ENCODE measurements at regions of chr1 and their contacts with region 1.

Region 1: DNA sequence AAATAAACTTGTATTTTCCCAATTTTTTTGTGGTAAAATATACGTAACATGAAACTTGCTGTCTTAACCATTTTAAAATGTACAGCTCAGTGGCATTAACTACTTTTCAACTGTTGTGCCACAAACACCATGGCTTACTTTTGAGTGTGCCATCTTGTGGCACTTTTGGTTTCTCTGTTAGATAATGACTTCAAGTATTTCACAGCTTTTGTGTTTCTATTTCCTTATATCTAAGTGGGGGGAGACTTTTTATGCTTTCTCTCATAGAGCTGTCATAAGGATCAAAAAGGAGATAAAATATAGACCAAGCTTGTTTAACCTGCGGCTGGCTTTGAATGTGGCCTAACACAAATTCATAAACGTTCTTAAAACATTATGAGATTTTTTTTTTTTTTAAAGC is 44.3 kb downstream of the CDC14A start:
- DNase-seq: peak in 1 of 2 donors; percentile 75
- ATAC-seq: peak; percentile 67 to 79 (median 77)
- H3K4me3 ChIP-seq: no peak overlapping the region
- H3K4me3 Mint-ChIP-seq: peak overlapping the region; percentile 72
- H3K27ac ChIP-seq: peak overlapping the region; percentile 89
- H3K27ac Mint-ChIP-seq: peak overlapping the region; percentile 80 to 95
- H3K4me1 ChIP-seq: peaks cover 49% of the 10 kb centered on the region
- H3K4me1 Mint-ChIP-seq: peaks cover 77% of the 10 kb centered on the region in 2 donors
- H3K27me3 ChIP-seq: no peaks in the 10 kb centered on the region
- H3K27me3 Mint-ChIP-seq: no peaks in the 10 kb centered on the region
- CTCF ChIP-seq: no peak

Region 2: GRCh38 chr1:100122177-100122576 is 274.5 kb before region 1 on chr1:
- intact Hi-C with region 1: no loop called
- DNase-seq: no peak
- ATAC-seq: no peak
- H3K4me3 ChIP-seq: no peak overlapping the region
- H3K4me3 Mint-ChIP-seq: no peak overlapping the region
- H3K27ac ChIP-seq: no peak overlapping the region
- H3K27ac Mint-ChIP-seq: no peak overlapping the region
- H3K4me1 ChIP-seq: no peaks in the 10 kb centered on the region
- H3K4me1 Mint-ChIP-seq: no peaks in the 10 kb centered on the region
- H3K27me3 ChIP-seq: no peaks in the 10 kb centered on the region
- H3K27me3 Mint-ChIP-seq: no peaks in the 10 kb centered on the region
- CTCF ChIP-seq: no peak

Region 3: GRCh38 chr1:100265931-100266740 is 130.5 kb before region 1 on chr1 and contains the start of gene RTCA:
- intact Hi-C with region 1: loop called (anchors 5 kb)
- DNase-seq: peak; percentile 93 to 99
- ATAC-seq: peak; percentile 93 to 98 (median 94)
- H3K4me3 ChIP-seq: peak within 1 kb of the TSS; percentile 86
- H3K4me3 Mint-ChIP-seq: peak within 1 kb of the TSS; percentile 100
- H3K27ac ChIP-seq: peak within 1 kb of the TSS; percentile 77
- H3K27ac Mint-ChIP-seq: peak within 1 kb of the TSS; percentile 97 to 99
- H3K4me1 ChIP-seq: peaks cover 32% of the 10 kb centered on the region
- H3K4me1 Mint-ChIP-seq: peaks cover 46 to 47% of the 10 kb centered on the region in 2 donors
- H3K27me3 ChIP-seq: no peaks in the 10 kb centered on the region
- H3K27me3 Mint-ChIP-seq: no peaks in the 10 kb centered on the region
- CTCF ChIP-seq: no peak
- total RNA-seq, gene RTCA: 49.3 to 60.8 (median 52.3) TPM

Region 4: GRCh38 chr1:100414693-100415497 is 18.2 kb after region 1 on chr1:
- intact Hi-C with region 1: loop called (anchors 2 kb)
- DNase-seq: peak in 1 of 2 donors; percentile 63
- ATAC-seq: peak; percentile 81 to 89 (median 88)
- H3K4me3 ChIP-seq: no peak overlapping the region
- H3K4me3 Mint-ChIP-seq: peak overlapping the region; percentile 22
- H3K27ac ChIP-seq: peak overlapping the region; percentile 59
- H3K27ac Mint-ChIP-seq: peak overlapping the region; percentile 89 to 92
- H3K4me1 ChIP-seq: peaks cover 9% of the 10 kb centered on the region
- H3K4me1 Mint-ChIP-seq: peaks cover 51 to 55% of the 10 kb centered on the region in 2 donors
- H3K27me3 ChIP-seq: no peaks in the 10 kb centered on the region
- H3K27me3 Mint-ChIP-seq: no peaks in the 10 kb centered on the region
- CTCF ChIP-seq: no peak

Region 5: GRCh38 chr1:100443811-100444571 is 47.3 kb after region 1 on chr1:
- intact Hi-C with region 1: loop called (anchors 2 kb)
- DNase-seq: peak in 1 of 2 donors; percentile 70
- ATAC-seq: peak; percentile 43 to 65 (median 58)
- H3K4me3 ChIP-seq: no peak overlapping the region
- H3K4me3 Mint-ChIP-seq: peak overlapping the region; percentile 77
- H3K27ac ChIP-seq: peak overlapping the region; percentile 46
- H3K27ac Mint-ChIP-seq: peak overlapping the region; percentile 85 to 92
- H3K4me1 ChIP-seq: peaks cover 29% of the 10 kb centered on the region
- H3K4me1 Mint-ChIP-seq: peaks cover 53 to 55% of the 10 kb centered on the region in 2 donors
- H3K27me3 ChIP-seq: no peaks in the 10 kb centered on the region
- H3K27me3 Mint-ChIP-seq: no peaks in the 10 kb centered on the region
- CTCF ChIP-seq: no peak

Region 6: DNA sequence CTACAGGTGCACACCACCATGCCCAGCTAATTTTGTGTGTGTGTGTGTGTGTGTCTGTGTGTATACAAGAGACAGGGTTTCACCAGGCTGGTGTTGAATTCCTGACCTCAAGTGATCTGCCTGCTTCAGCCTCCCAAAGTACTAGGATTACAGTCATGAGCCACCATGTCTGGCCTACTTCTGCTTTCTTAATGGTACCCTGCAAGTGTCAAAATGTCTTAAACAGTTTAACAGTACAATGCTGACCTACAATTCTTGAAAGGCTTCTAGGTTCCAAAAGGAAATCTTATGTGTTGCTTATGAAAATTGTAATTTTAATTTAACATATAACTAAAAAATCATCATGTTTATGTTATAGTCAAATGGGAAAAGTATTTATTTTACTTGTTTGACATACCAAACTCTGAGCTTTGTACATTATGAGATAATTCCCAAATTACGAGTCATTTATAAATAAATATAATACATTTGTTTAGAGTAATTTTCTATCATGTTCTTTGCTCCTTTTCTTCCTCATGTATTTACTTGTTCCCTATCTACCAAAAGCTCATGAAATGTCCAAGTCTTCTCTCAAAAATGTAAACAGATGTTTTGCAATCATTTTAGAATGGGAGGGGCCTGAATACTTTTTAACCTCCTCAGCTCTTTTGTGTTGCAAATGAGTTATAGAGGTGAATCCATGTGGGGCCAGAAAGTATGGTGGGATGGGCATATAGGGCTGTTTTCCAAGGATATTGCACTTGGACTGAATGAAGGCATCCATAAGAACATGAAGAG is 314.4 kb after region 1 on chr1:
- intact Hi-C with region 1: loop called (anchors 2 kb)
- DNase-seq: no peak
- ATAC-seq: no peak
- H3K4me3 ChIP-seq: no peak overlapping the region
- H3K4me3 Mint-ChIP-seq: no peak overlapping the region
- H3K27ac ChIP-seq: no peak overlapping the region
- H3K27ac Mint-ChIP-seq: peak overlapping the region in 1 of 2 donors; percentile 96
- H3K4me1 ChIP-seq: peaks cover 22% of the 10 kb centered on the region
- H3K4me1 Mint-ChIP-seq: peaks cover 46 to 49% of the 10 kb centered on the region in 2 donors
- H3K27me3 ChIP-seq: peaks cover 2% of the 10 kb centered on the region
- H3K27me3 Mint-ChIP-seq: peaks cover 3 to 35% of the 10 kb centered on the region in 2 donors
- CTCF ChIP-seq: no peak